ENCODE measurements at regions of chr15 and their contacts with region 1.

Region 1: DNA sequence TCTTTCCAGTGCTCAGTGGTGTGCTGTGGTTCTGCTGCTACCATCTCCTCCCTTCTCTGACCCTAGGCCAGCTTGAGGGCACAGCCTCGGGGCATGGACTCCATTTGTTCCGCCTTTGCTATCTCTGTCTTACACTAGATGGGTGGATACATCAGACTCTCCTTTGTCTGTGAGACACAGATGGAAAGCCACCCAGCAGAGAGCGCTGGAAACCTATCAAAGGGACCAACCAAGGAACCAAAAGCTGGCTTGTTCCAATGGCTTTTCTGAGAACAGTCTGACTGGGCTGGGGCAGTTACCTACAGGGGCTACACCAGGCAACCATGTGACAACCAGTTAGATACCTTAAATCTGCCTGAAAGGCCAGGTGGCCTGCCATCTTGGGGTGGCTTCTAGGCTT is 63.8 kb downstream of the NPTN start:
- DNase-seq: no peak

Region 2: GRCh38 chr15:73633111-73633990 is 64.0 kb after region 1 on chr15 and contains the start of gene NPTN:
- intact Hi-C with region 1: loop called (anchors 5 kb)
- DNase-seq: peak; percentile 97 to 100 (median 99)